Tibial artery (tissue), 4 donors: ENCODE measurements at regions of chr7 and their contacts with region 1.

Region 1: DNA sequence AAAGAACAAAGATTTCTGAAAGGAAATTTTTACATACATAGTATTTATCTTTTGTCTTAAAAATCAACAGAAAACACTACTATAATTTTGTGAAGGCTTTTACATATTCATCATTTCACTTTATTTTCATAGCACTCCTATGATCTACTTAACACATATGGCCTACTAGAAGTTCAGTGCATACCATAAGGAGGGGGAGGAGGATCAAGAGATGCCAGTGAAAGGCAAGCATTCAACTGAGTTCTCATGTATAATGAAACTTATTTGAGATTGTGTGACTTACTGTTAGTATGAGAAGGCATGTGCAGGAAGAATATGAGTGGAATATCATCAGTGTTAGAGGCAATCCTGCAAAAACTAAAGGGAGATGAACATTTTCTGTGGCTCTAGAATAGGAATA is 10.6 kb downstream of the BRAF start:
- DNase-seq: no peak
- H3K4me3 ChIP-seq: no peak overlapping the region
- H3K27ac ChIP-seq: no peak overlapping the region
- H3K4me1 ChIP-seq: peaks cover 0 to 17% (median 3%) of the 10 kb centered on the region in 4 donors
- H3K27me3 ChIP-seq: no peaks in the 10 kb centered on the region
- CTCF ChIP-seq: no peak

Region 2: DNA sequence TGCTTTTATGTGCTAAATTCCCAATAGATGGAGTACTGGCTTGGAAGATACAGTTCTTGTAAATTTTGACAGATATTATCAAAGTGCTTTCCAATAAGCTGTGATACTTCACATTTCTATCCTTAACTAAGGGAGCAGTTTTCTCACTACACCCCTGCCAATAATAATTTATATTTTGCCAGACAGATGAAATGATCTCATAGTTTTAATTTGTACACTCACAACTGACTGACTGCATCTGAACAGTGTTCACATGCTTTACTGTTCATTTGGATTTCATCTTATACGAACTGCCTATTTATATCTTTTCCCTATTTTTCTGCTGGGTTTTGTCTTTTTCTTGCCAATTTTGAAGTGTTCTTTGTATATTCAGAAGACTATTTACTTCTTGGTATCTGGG is 85.3 kb before region 1 on chr7:
- intact Hi-C with region 1: loop called (anchors 10 kb)
- DNase-seq: no peak
- H3K4me3 ChIP-seq: no peak overlapping the region
- H3K27ac ChIP-seq: no peak overlapping the region
- H3K4me1 ChIP-seq: peaks cover 0 to 4% (median 0%) of the 10 kb centered on the region in 4 donors
- H3K27me3 ChIP-seq: no peaks in the 10 kb centered on the region
- CTCF ChIP-seq: no peak